Head of caudate nucleus (tissue), 42 donors: ENCODE measurements at regions of chr22 and their contacts with region 1.

Region 1: GRCh38 chr22:31983911-31984656 is 39.7 kb downstream of the YWHAH start:
- DNase-seq: no peak

Region 2: GRCh38 chr22:32097018-32097417 is 112.9 kb after region 1 on chr22:
- intact Hi-C with region 1: no loop called
- DNase-seq: no peak

Region 3: DNA sequence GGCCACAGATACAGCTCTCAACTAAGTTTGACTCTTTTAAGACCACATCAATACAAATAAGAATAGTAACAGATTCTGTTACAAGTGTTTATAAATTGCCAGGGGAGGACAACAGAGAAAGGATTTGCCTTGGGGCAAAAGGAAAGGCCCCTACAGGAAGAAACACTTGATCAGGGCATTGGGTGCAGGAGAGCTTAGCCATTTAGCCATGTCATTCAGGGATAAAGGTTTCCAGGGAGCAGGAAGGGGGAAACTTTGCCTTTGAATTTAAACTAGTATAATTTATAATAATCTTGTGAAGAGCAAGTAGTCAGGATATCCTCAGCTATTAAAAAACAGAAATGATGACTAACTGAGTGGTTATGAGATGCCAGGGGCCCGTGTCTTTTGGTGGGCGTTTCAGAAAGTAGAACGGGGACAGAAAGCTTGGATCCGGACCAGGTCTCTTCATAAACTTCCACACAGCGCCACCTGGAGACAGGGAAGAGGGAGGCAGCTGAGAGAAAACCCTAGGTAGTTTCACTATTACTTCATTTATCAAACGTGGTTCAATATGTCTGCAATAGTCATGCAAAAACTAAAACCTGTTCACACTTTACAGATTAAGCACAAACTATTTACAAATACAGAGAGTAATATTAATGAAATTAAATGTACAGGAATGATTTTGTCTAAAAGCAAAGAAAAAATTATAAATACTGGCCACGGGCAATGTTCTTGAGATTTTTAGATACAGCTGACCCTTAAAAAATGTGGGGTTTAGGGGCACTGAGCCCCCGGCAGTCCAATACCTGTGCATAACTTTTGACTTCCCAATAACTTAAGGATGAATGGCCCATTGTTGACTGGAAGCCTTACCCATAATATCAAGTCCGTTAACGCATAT is 282.0 kb after region 1 on chr22:
- intact Hi-C with region 1: loop called (anchors 10 kb)
- DNase-seq: peak; percentile 65 to 91 (median 80)